Activated CD4-positive, alpha-beta T cell treated with anti-CD3 and anti-CD28 coated beads for 36 hours (primary cell): ENCODE measurements at regions of chr2 and their contacts with region 1.

Region 1: GRCh38 chr2:25376750-25377621 is 35.3 kb upstream of the DNMT3A start:
- DNase-seq: peak; percentile 96
- ATAC-seq: peak; percentile 98
- H3K4me3 Mint-ChIP-seq: peak overlapping the region; percentile 69
- H3K27ac Mint-ChIP-seq: peak overlapping the region; percentile 92
- H3K4me1 Mint-ChIP-seq: peaks cover 42% of the 10 kb centered on the region
- H3K27me3 Mint-ChIP-seq: no peaks in the 10 kb centered on the region

Region 2: GRCh38 chr2:25301453-25302352 is 75.3 kb before region 1 on chr2:
- CTCF ChIA-PET with region 1: interaction called, 9 read pairs
- POLR2A ChIA-PET with region 1: no interaction called
- intact Hi-C with region 1: loop called in 1 of 2 experiments (anchors 1 kb)
- DNase-seq: peak; percentile 90
- ATAC-seq: peak; percentile 95
- H3K4me3 Mint-ChIP-seq: no peak overlapping the region
- H3K27ac Mint-ChIP-seq: peak overlapping the region; percentile 48
- H3K4me1 Mint-ChIP-seq: peaks cover 74% of the 10 kb centered on the region
- H3K27me3 Mint-ChIP-seq: no peaks in the 10 kb centered on the region

Region 3: GRCh38 chr2:25362049-25362433 is 14.9 kb before region 1 on chr2:
- CTCF ChIA-PET with region 1: interaction called, 105 read pairs
- POLR2A ChIA-PET with region 1: interaction called, 10 read pairs
- intact Hi-C with region 1: loop called (anchors 1 kb)
- DNase-seq: peak; percentile 97
- ATAC-seq: peak; percentile 97
- H3K4me3 Mint-ChIP-seq: peak overlapping the region; percentile 79
- H3K27ac Mint-ChIP-seq: peak overlapping the region; percentile 96
- H3K4me1 Mint-ChIP-seq: peaks cover 14% of the 10 kb centered on the region
- H3K27me3 Mint-ChIP-seq: no peaks in the 10 kb centered on the region

Region 4: DNA sequence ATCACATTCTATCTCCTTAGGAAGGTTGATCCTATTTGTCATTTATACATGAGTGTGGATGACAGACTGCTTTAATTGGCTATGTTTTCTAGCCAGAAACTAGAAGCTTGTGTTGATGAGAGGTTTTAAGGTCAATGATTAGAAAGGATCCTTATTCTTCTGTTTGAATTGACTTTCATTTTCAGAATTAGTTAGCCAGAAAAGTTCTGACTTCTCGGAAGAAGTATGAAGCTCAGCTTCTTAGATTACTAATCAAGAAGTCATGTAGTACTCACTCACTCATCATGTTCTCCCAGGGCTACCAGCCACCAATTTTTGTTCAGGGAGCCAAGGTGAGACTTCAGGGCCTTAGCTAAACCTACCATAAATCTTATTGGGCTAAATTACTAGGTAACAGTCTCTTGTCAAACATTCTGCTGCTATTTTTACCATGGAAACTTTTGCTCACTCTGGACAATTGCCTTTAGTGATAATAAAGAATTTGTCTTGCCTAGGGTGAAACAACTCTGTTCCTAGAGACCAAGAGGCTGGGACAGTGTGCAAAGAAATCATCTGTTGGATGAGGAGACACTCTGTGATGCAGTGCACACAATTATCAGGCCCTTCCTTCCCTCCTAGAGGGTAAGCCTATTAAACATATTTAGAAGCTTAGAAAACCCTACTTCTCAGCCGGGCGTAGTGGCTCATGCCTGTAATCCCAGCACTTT is 76.4 kb after region 1 on chr2:
- CTCF ChIA-PET with region 1: interaction called, 15 read pairs
- POLR2A ChIA-PET with region 1: interaction called, 3 read pairs
- intact Hi-C with region 1: loop called (anchors 1 kb)
- DNase-seq: peak; percentile 69
- ATAC-seq: peak; percentile 97
- H3K4me3 Mint-ChIP-seq: peak overlapping the region; percentile 19
- H3K27ac Mint-ChIP-seq: peak overlapping the region; percentile 91
- H3K4me1 Mint-ChIP-seq: peaks cover 30% of the 10 kb centered on the region
- H3K27me3 Mint-ChIP-seq: no peaks in the 10 kb centered on the region

Region 5: GRCh38 chr2:25558262-25558661 is 181.3 kb after region 1 on chr2:
- CTCF ChIA-PET with region 1: interaction called, 5 read pairs
- POLR2A ChIA-PET with region 1: interaction called, 3 read pairs
- intact Hi-C with region 1: loop called (anchors 1 to 5 kb)
- DNase-seq: peak; percentile 67
- ATAC-seq: peak; percentile 88
- H3K4me3 Mint-ChIP-seq: no peak overlapping the region
- H3K27ac Mint-ChIP-seq: peak overlapping the region; percentile 74
- H3K4me1 Mint-ChIP-seq: peaks cover 60% of the 10 kb centered on the region
- H3K27me3 Mint-ChIP-seq: no peaks in the 10 kb centered on the region